Breast epithelium (tissue), 4 donors: ENCODE measurements at regions of chr17 and their contacts with region 1.

Region 1: DNA sequence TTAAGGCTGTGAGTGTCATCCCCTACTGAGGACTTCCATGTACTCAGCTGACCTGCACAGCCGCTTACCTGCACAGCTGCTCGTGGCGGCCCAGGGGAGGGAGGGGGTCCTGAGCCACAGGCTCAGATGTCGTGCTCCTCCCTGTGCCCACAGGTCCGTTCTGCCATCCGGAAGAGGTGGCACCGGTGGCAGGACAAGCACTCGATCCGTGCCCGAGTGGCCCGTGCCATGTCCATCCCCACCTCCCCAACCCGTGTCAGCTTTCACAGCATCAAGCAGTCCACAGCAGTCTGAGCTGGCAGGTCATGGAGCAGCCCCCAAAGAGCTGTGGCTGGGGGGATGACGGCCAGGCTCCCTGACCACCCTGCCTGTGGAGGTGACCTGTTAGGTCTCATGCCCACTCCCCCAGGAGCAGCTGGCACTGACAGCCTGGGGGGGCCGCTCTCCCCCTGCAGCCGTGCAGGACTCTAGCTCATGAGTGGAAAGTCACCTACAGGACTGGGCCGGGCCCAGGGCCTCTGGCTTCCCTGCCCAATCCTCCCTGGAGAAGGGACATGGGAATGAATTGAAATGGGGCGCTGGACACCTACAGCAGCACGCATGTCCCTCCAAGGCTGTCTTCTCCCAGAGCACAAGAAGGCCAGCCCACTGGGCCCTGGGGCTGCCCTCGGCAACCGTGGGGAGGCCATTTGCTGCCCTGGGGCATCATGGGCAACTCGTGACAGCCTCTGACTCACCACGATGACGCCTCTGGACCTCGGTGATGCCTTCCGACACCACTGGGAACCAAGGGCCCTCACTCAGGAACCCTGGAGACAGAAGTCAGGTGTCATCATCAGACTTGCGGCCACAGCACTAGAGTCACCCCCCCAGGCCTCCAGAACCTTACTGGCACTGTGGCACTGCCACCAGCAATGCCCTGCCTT is 9.9 kb upstream of the SPPL2C start:
- DNase-seq: no peak
- H3K4me3 ChIP-seq: no peak overlapping the region
- H3K27ac ChIP-seq: no peak overlapping the region
- H3K4me1 ChIP-seq: no peaks in the 10 kb centered on the region
- H3K27me3 ChIP-seq: peaks cover 0 to 7% of the 10 kb centered on the region in 2 donors
- CTCF ChIP-seq: no peak
- POLR2A ChIP-seq: no peak

Region 2: GRCh38 chr17:45640141-45640850 is 194.4 kb before region 1 on chr17:
- intact Hi-C with region 1: loop called (anchors 5 kb)
- DNase-seq: peak; percentile 42 to 68
- H3K4me3 ChIP-seq: no peak overlapping the region
- H3K27ac ChIP-seq: no peak overlapping the region
- H3K4me1 ChIP-seq: no peaks in the 10 kb centered on the region
- H3K27me3 ChIP-seq: no peaks in the 10 kb centered on the region
- CTCF ChIP-seq: peak; percentile 66 to 93 (median 92)
- POLR2A ChIP-seq: no peak